ENCODE measurements at regions of chr4 and their contacts with region 1.

Region 1: GRCh38 chr4:121307445-121308327 is 73.1 kb downstream of the QRFPR start:
- DNase-seq: peak; percentile 69
- ATAC-seq: peak; percentile 80
- H3K4me3 Mint-ChIP-seq: no peak overlapping the region
- H3K27ac Mint-ChIP-seq: peak overlapping the region; percentile 50
- H3K4me1 Mint-ChIP-seq: peaks cover 12% of the 10 kb centered on the region
- H3K27me3 Mint-ChIP-seq: no peaks in the 10 kb centered on the region
- CTCF ChIP-seq: peak; percentile 93

Region 2: DNA sequence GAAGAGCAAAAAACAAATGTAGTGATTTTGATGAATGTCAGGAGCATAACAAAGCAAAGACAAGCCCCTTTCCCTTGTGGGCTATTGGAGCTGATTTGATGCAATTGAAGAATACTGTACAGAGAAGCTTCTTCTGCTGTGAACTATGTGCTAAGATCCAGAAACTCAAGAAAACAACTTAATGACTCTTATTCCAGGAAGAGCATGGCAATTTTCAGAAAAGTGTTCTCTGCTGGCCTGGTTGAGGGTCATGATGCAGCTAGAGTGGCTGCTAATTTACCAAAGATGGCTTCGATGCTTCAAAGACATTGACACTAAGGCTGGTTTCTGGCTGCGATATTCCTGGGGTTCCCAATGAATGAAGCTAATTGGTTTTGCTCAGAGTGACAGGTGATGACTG is 189.3 kb before region 1 on chr4:
- CTCF ChIA-PET with region 1: interaction called, 13 read pairs
- POLR2A ChIA-PET with region 1: no interaction called
- intact Hi-C with region 1: no loop called
- DNase-seq: no peak
- ATAC-seq: no peak
- H3K4me3 Mint-ChIP-seq: no peak overlapping the region
- H3K27ac Mint-ChIP-seq: no peak overlapping the region
- H3K4me1 Mint-ChIP-seq: peaks cover 31% of the 10 kb centered on the region
- H3K27me3 Mint-ChIP-seq: no peaks in the 10 kb centered on the region
- CTCF ChIP-seq: no peak

Region 3: DNA sequence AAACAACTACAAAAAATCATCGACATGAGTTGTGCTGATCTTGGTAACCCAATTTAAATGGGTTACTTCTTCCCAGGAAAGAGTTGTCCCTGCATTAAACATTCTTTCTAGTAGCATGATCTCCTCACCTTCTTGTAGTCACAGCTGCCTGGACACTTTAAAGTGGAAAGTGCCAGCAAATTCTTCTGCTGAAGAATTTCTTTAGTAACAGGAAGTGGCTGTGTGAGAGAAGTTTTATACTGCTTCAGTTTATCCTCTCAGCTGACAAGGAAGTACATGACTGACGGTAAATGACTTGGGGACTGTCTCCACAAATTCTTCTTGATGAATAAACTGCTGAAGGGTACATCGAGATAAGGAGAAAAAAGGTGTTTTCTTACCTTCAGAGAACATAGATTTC is 125.4 kb before region 1 on chr4:
- CTCF ChIA-PET with region 1: interaction called, 16 read pairs
- POLR2A ChIA-PET with region 1: no interaction called
- intact Hi-C with region 1: no loop called
- DNase-seq: no peak
- ATAC-seq: peak; percentile 63
- H3K4me3 Mint-ChIP-seq: peak overlapping the region; percentile 76
- H3K27ac Mint-ChIP-seq: peak overlapping the region; percentile 89
- H3K4me1 Mint-ChIP-seq: peaks cover 63% of the 10 kb centered on the region
- H3K27me3 Mint-ChIP-seq: no peaks in the 10 kb centered on the region
- CTCF ChIP-seq: no peak

Region 4: DNA sequence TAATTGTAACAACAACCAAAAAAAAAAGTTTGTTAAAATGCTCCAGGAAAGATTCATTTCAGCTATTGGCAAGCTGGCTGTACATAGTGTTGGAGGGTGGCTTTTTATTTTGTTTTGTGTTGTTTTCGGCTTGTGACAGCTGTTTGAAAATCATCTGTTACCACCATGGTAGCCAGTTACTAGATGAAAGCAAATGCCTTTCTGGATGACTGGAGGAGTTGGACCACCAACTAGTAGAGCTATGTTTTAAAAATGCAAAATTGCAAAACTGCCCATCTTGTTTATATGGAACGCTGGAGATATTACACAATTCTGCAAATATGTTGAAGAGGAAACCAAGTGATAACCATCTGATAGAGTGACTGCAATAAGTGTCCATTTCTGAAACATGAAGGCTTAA is 90.3 kb before region 1 on chr4:
- CTCF ChIA-PET with region 1: interaction called, 12 read pairs
- POLR2A ChIA-PET with region 1: no interaction called
- intact Hi-C with region 1: no loop called
- DNase-seq: no peak
- ATAC-seq: no peak
- H3K4me3 Mint-ChIP-seq: no peak overlapping the region
- H3K27ac Mint-ChIP-seq: no peak overlapping the region
- H3K4me1 Mint-ChIP-seq: peaks cover 30% of the 10 kb centered on the region
- H3K27me3 Mint-ChIP-seq: no peaks in the 10 kb centered on the region
- CTCF ChIP-seq: no peak

Region 5: GRCh38 chr4:121272526-121272925 is 35.2 kb before region 1 on chr4:
- CTCF ChIA-PET with region 1: interaction called, 35 read pairs
- POLR2A ChIA-PET with region 1: no interaction called
- intact Hi-C with region 1: no loop called
- DNase-seq: no peak
- ATAC-seq: peak; percentile 79
- H3K4me3 Mint-ChIP-seq: no peak overlapping the region
- H3K27ac Mint-ChIP-seq: no peak overlapping the region
- H3K4me1 Mint-ChIP-seq: peaks cover 8% of the 10 kb centered on the region
- H3K27me3 Mint-ChIP-seq: no peaks in the 10 kb centered on the region
- CTCF ChIP-seq: no peak

Region 6: GRCh38 chr4:121397941-121398601 is 90.4 kb after region 1 on chr4:
- CTCF ChIA-PET with region 1: no interaction called
- POLR2A ChIA-PET with region 1: no interaction called
- intact Hi-C with region 1: no loop called
- DNase-seq: no peak
- ATAC-seq: no peak
- H3K4me3 Mint-ChIP-seq: no peak overlapping the region
- H3K27ac Mint-ChIP-seq: no peak overlapping the region
- H3K4me1 Mint-ChIP-seq: no peaks in the 10 kb centered on the region
- H3K27me3 Mint-ChIP-seq: no peaks in the 10 kb centered on the region
- CTCF ChIP-seq: no peak

Measured in activated CD8-positive, alpha-beta T cell treated with anti-CD3 and anti-CD28 coated beads for 36 hours (primary cell).